ENCODE measurements at regions of chr7 and their contacts with region 1.

Region 1: DNA sequence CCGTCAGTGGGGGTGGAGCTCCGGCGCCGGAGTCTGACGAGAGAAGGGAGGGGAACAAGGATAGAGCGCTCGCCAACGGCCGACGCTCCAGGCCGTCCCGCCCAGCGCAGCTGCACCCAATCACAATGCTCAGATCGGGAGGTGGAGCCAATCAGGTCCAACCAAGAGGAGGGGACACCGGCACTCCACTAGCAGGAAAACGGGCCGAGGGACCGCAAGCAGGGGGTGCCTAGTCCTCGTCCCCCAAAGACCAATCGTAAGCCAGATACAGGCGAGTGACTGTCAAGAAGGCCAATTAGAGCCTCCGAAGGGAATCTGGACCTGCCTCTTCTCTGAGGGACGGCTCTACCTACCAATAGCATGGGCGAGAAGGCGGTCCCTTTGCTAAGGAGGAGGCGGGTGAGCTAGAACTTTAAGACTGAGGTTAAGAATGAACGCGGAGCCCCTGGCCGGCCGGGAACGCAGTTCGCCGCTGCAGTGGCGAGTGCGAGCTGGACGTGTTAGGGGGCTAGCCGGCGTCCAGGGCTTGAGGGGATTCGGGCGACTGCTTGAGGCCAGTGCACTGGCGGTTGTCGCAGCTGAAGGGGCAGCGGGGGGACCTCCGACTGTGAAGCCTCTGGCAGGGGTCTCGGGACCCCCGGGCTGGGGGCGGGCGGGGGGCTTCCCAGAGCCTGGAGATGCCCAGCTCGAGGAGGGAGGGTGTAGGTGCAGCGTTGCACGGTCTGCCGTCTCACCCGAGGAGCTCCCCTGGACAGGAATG is at the start of gene FBXO24:
- DNase-seq: peak; percentile 100
- ATAC-seq: peak; percentile 96 to 98
- H3K4me3 ChIP-seq: peak within 1 kb of the TSS; percentile 89 to 98 (median 96)
- H3K27ac ChIP-seq: peak within 1 kb of the TSS; percentile 92 to 97 (median 96)
- H3K4me1 ChIP-seq: peaks cover 11 to 30% of the 10 kb centered on the region in 2 donors
- H3K27me3 ChIP-seq: no peaks in the 10 kb centered on the region
- CTCF ChIP-seq: no peak
- POLR2A ChIP-seq: no peak
- total RNA-seq, gene FBXO24: not detected

Region 2: GRCh38 chr7:100538654-100539435 is 47.6 kb before region 1 on chr7 and contains the start of gene AGFG2:
- in situ Hi-C with region 1: no loop called
- intact Hi-C with region 1: loop called (anchors 1 kb)
- DNase-seq: peak; percentile 100
- ATAC-seq: peak; percentile 98
- H3K4me3 ChIP-seq: peak within 1 kb of the TSS; percentile 74 to 97 (median 82)
- H3K27ac ChIP-seq: peak within 1 kb of the TSS; percentile 60 to 85 (median 80)
- H3K4me1 ChIP-seq: peaks cover 8 to 20% of the 10 kb centered on the region in 2 donors
- H3K27me3 ChIP-seq: no peaks in the 10 kb centered on the region
- CTCF ChIP-seq: no peak
- POLR2A ChIP-seq: peak; percentile 39 to 53
- total RNA-seq, gene AGFG2: 10.7 to 16.4 (median 13.5) TPM

Region 3: GRCh38 chr7:100604028-100604975 is 17.9 kb after region 1 on chr7:
- in situ Hi-C with region 1: no loop called
- intact Hi-C with region 1: loop called (anchors 2 kb)
- DNase-seq: peak; percentile 38 to 51
- ATAC-seq: peak; percentile 69 to 80
- H3K4me3 ChIP-seq: peak overlapping the region; percentile 75 to 99 (median 89)
- H3K27ac ChIP-seq: peak overlapping the region; percentile 74 to 85 (median 77)
- H3K4me1 ChIP-seq: peaks cover 4 to 13% of the 10 kb centered on the region in 2 donors
- H3K27me3 ChIP-seq: peaks cover 0 to 15% (median 8%) of the 10 kb centered on the region in 3 donors
- CTCF ChIP-seq: peak in 4 of 5 experiments; percentile 37 to 55 (median 44)
- POLR2A ChIP-seq: peak; percentile 10 to 12

Region 4: DNA sequence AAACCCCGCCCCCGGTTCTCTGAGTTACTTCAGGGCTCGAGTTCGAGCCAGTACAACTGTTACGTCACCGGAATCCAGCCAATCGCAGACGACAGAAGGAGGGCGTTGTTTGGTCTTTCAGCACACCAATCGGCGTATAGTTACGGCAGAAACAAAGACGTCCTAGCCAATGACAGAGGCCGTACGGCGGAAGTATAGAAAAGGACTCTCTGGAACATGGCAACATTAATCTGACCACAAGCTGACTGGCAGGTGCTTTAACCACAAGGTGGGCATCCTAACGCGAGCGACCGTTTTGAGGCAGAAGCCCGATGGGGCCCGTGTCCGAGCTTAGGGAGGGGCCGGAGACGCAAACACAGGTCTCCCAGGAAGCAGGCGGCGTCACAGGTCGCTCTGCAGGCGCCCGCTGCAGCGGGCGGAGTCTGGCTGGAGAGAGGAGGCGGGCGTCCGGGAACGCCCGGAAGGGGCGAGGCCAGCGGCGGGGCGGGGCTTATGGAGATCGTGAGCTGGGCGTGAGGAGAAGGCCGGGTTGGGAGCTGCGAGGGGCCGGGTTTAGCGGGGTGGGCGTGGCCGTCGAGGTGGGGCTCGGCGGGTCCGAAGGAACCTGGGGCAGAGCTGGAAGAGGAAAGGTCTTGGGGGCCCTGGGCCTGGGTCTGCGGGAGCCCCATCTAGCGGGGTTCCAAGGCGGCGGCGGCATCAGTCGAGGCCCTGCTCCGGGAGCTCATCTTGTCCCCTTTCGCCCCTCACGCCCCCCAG is 25.7 kb after region 1 on chr7 and contains the start of gene MOSPD3:
- in situ Hi-C with region 1: no loop called
- intact Hi-C with region 1: loop called (anchors 1 kb)
- DNase-seq: peak; percentile 98 to 99
- ATAC-seq: peak; percentile 99 to 100
- H3K4me3 ChIP-seq: peak within 1 kb of the TSS; percentile 69 to 91 (median 76)
- H3K27ac ChIP-seq: peak within 1 kb of the TSS; percentile 90 to 99 (median 96)
- H3K4me1 ChIP-seq: peaks cover 0 to 14% of the 10 kb centered on the region in 2 donors
- H3K27me3 ChIP-seq: no peaks in the 10 kb centered on the region
- CTCF ChIP-seq: no peak
- POLR2A ChIP-seq: peak; percentile 74 to 75
- total RNA-seq, gene MOSPD3: 3.5 to 9.1 (median 4.6) TPM

Region 5: DNA sequence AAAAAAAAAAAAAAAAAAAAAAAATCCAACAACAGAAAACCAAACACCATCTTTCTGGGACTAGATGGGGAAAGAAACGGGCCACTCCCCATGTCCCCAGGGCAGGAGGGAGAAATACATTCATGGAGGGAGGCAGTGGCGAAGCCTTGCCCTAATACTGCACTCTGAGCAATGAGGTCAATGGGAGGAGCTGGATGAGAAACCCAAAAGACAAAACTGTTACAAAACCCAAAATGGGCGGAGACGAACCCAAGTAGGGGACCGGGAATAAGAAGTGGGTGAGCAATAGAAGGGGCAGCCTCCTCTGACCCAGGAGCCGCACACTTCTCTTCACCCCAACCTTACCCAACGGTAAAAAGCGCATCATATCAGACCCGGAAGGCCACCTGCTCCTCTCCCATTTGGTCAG is 93.7 kb after region 1 on chr7:
- in situ Hi-C with region 1: no loop called
- intact Hi-C with region 1: no loop called
- DNase-seq: peak; percentile 43 to 70
- ATAC-seq: peak; percentile 37 to 51
- H3K4me3 ChIP-seq: no peak overlapping the region
- H3K27ac ChIP-seq: peak overlapping the region; percentile 28 to 58 (median 44)
- H3K4me1 ChIP-seq: peaks cover 0 to 8% of the 10 kb centered on the region in 2 donors
- H3K27me3 ChIP-seq: no peaks in the 10 kb centered on the region
- CTCF ChIP-seq: no peak
- POLR2A ChIP-seq: no peak

Region 6: GRCh38 chr7:100691676-100692577 is 105.5 kb after region 1 on chr7:
- in situ Hi-C with region 1: loop called in 1 of 4 experiments (anchors 10 kb)
- intact Hi-C with region 1: no loop called
- DNase-seq: peak; percentile 59 to 68
- ATAC-seq: peak; percentile 55 to 73
- H3K4me3 ChIP-seq: peak overlapping the region; percentile 37 to 89 (median 71)
- H3K27ac ChIP-seq: peak overlapping the region; percentile 69 to 84 (median 77)
- H3K4me1 ChIP-seq: peaks cover 44 to 48% of the 10 kb centered on the region in 2 donors
- H3K27me3 ChIP-seq: no peaks in the 10 kb centered on the region
- CTCF ChIP-seq: peak; percentile 78 to 93 (median 89)
- POLR2A ChIP-seq: no peak

Measured in gastrocnemius medialis (tissue), 4 donors.